ENCODE measurements at regions of chr1 and their contacts with region 1.

Region 1: DNA sequence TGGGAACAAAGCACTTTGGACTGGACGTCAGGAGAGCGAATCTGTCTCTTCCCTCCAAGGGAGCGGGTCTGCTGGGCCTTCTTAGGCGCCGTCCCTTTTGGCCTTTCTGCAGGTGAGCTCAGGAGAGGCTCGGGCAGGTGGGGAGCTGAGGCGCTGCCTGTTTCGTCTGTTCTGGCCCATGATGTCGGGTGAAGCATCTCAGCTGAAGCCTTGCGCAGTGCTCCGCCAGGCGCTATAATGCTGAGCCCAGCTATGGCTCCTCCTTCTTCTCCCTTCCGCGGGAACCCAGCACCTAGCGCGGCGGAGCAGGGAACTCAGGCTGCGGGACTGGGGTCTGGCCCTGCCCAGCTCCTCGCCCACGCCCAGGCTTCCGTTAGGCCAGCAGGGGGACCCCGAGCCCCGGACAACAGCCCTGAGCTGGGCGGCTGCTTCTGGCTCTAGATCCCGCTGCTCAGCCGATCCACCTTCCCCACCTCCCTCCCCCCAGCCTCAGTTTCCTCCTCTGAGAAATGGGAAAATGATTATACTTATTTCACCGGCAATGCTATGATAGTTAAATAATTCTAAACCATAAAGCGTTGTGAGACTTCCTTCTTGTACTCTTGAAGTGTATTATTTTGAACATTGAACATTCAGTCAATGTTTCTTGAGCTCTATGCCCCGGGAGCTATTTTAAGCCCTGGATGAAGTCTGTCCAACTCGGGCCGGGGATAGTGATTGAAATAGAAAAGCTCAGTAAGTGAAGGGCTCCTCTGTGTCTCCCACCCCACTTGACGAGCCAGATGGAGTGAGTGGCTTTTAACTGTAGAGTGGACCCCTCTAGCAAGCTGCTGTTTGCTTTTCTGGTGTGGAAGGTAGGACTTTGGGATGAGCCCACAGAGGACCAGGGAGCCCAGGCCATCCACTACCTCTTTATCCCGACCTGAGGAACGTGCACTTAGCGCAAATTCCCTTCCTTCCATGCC is 9.6 kb upstream of the ADORA1 start:
- DNase-seq: peak; percentile 10
- ATAC-seq: peak; percentile 99
- H3K4me3 ChIP-seq: peak overlapping the region in 1 of 2 experiments; percentile 35; a peak in 2 of 4 replicates
- H3K27ac ChIP-seq: no peak overlapping the region
- H3K4me1 ChIP-seq: peaks cover 2% of the 10 kb centered on the region; the same call in 1 of the 2 replicates
- H3K27me3 ChIP-seq: peaks cover 8% of the 10 kb centered on the region; the same call in 1 of the 2 replicates
- CTCF ChIP-seq: peak; percentile 91

Region 2: GRCh38 chr1:202516434-202516877 is 601.4 kb before region 1 on chr1:
- CTCF ChIA-PET with region 1: no interaction called
- POLR2A ChIA-PET with region 1: no interaction called
- in situ Hi-C with region 1: no loop called
- intact Hi-C with region 1: no loop called
- DNase-seq: no peak
- ATAC-seq: no peak
- H3K4me3 ChIP-seq: no peak overlapping the region
- H3K27ac ChIP-seq: no peak overlapping the region
- H3K4me1 ChIP-seq: no peaks in the 10 kb centered on the region
- H3K27me3 ChIP-seq: no peaks in the 10 kb centered on the region
- CTCF ChIP-seq: no peak

Region 3: GRCh38 chr1:203172128-203173010 is 54.5 kb after region 1 on chr1:
- CTCF ChIA-PET with region 1: interaction called, 19 read pairs
- POLR2A ChIA-PET with region 1: no interaction called
- in situ Hi-C with region 1: no loop called
- intact Hi-C with region 1: loop called (anchors 2 kb)
- DNase-seq: peak; percentile 51
- ATAC-seq: peak; percentile 87
- H3K4me3 ChIP-seq: no peak overlapping the region
- H3K27ac ChIP-seq: no peak overlapping the region
- H3K4me1 ChIP-seq: no peaks in the 10 kb centered on the region; the same call in 1 of the 2 replicates
- H3K27me3 ChIP-seq: no peaks in the 10 kb centered on the region
- CTCF ChIP-seq: peak; percentile 94

Region 4: DNA sequence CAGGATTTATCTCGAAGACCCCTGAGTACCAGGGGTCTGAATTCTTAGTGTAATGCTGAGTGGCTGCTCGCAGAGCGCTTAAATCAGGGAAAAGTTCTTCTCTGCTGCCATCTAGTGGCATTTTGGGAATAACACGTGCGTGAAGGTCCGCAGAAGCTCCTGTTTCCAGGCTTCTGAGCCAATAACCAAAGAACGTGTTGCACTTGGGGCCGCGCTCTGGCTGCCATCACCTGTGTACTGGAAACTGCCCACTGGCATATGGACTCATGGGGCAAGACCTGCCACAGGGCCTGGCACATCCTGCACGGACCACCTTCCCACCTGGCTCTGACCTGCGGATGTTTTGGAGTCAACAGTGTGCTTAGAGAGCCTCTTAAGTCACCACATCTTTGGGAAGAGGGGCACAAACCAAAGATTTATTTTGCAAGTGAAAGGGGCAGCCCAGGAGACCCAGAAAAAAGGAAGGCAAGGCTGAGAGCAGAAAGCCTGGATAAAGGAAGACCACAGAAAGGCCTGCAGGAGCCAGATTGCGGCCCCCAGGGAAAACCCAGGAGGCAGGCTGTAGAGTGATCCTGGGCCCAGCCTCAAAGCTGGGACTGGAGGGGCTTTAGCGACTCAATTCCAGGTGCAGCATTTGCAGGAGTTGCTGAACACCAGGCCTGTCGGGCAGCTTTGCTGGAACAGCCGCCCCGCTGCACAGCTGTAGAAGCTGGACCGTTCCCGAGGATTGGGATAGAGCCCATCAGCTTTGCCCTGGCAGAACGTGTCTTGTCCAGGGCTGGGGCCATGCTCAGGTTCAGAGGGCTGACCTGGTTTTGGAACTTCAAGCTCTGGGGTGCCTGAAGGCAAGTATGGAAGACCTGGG is 98.6 kb after region 1 on chr1:
- CTCF ChIA-PET with region 1: interaction called, 43 read pairs
- POLR2A ChIA-PET with region 1: no interaction called
- in situ Hi-C with region 1: no loop called
- intact Hi-C with region 1: loop called (anchors 1 kb)
- DNase-seq: peak; percentile 53
- ATAC-seq: peak; percentile 86
- H3K4me3 ChIP-seq: no peak overlapping the region
- H3K27ac ChIP-seq: no peak overlapping the region
- H3K4me1 ChIP-seq: no peaks in the 10 kb centered on the region
- H3K27me3 ChIP-seq: no peaks in the 10 kb centered on the region; the same call in 1 of the 2 replicates
- CTCF ChIP-seq: peak; percentile 83

Measured in Panc1 (cell line).